ENCODE measurements at regions of chr10 and their contacts with region 1.

Region 1: DNA sequence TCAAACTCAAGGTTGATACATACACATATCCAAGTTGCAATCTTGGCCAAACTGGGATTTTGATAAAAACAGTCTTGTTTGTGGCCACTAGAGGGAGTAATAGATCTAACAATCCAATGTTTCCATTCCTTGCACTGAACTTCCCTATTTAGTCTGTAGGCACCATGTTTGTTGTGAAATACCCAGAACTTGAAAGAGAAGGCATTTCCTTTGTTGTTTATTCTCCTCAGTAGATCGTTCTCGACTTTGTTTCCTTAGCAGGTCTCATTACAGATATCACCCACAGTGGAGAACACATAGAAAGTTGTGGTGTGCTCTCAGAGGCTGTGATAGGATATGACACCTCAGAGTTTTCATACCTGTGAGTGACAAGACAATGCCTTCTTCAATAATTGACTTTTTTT is 70.3 kb upstream of the MXI1 start:
- DNase-seq: no peak
- H3K4me3 ChIP-seq: no peak overlapping the region
- H3K27ac ChIP-seq: peak overlapping the region; percentile 31 to 53
- H3K4me1 ChIP-seq: no peaks in the 10 kb centered on the region
- H3K27me3 ChIP-seq: no peaks in the 10 kb centered on the region
- CTCF ChIP-seq: peak; percentile 75 to 95 (median 88)
- POLR2A ChIP-seq: no peak

Region 2: DNA sequence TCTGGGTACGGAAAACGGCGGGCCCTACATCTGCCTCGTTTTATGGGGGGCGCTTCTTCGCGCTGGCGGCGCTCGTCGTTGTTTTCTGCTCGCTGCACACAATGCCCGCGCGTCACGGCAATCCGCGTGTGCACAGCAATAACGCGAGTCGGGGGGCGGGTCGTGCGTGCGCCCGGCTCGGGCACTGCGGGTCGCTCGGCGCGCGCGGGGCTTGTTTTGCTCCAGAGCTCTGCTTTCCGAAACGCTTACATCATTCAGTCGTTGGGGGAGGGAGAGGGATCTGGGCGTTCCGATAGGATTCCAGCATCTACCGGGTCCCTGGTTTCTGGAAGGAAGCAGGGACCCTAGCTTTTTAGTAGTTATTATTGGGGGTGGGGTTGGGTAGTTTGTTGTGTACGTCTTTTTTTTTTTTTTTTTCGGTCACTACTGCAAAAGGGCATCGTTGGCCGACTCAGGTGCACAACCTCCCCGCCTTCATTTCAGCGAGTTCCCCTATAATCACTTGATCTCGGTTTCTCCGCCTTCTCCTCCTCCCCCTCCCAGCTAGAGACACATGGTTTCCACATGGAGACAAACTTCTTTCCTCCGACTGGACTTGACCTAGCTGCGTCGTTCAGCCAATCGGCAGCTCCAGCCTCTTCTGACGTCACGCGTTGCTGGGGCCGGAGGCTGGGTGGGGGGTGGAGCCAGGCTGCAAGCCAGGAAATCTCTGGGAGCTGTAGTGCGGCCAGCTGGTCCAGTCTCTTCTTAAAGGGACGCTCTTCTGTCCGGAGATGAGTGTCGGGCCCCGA is 73.7 kb after region 1 on chr10:
- intact Hi-C with region 1: loop called (anchors 5 kb)
- DNase-seq: peak; percentile 97 to 98
- H3K4me3 ChIP-seq: peak overlapping the region; percentile 61 to 78
- H3K27ac ChIP-seq: peak overlapping the region; percentile 95 to 98
- H3K4me1 ChIP-seq: no peaks in the 10 kb centered on the region
- H3K27me3 ChIP-seq: no peaks in the 10 kb centered on the region
- CTCF ChIP-seq: no peak
- POLR2A ChIP-seq: peak; percentile 60 to 87

Region 3: DNA sequence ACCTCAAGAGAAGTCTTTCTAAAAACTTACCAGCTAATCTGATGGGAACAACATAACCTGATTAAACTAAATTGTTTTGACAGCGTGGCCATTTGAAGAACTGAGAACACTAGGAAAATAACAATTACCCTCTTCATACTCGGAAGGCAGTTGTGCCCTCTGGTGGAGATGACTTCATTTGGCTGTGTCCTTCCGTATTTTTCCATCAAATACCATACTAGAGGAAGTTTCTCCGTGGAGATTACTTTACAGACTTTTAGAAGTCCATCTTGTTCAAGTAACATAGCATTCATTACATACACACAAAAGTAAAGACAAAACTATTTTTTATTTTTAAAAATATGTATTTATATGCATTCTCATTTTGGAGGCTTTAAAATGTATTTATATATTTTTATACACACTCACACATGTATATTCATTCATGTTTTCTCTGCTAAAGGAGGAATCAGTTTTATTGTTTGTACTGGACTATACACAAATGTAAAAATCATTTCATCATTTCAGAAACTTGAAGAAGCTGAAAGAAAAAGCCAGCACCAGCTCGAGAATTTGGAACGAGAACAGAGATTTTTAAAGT is 142.4 kb after region 1 on chr10:
- intact Hi-C with region 1: loop called (anchors 10 kb)
- DNase-seq: peak; percentile 52 to 67
- H3K4me3 ChIP-seq: no peak overlapping the region
- H3K27ac ChIP-seq: no peak overlapping the region
- H3K4me1 ChIP-seq: no peaks in the 10 kb centered on the region
- H3K27me3 ChIP-seq: no peaks in the 10 kb centered on the region
- CTCF ChIP-seq: peak; percentile 65 to 88 (median 76)
- POLR2A ChIP-seq: no peak

Measured in uterus (tissue), 4 donors.